Right ventricle myocardium superior (tissue), 1 donor: ENCODE measurements at regions of chr17 and their contacts with region 1.

Region 1: DNA sequence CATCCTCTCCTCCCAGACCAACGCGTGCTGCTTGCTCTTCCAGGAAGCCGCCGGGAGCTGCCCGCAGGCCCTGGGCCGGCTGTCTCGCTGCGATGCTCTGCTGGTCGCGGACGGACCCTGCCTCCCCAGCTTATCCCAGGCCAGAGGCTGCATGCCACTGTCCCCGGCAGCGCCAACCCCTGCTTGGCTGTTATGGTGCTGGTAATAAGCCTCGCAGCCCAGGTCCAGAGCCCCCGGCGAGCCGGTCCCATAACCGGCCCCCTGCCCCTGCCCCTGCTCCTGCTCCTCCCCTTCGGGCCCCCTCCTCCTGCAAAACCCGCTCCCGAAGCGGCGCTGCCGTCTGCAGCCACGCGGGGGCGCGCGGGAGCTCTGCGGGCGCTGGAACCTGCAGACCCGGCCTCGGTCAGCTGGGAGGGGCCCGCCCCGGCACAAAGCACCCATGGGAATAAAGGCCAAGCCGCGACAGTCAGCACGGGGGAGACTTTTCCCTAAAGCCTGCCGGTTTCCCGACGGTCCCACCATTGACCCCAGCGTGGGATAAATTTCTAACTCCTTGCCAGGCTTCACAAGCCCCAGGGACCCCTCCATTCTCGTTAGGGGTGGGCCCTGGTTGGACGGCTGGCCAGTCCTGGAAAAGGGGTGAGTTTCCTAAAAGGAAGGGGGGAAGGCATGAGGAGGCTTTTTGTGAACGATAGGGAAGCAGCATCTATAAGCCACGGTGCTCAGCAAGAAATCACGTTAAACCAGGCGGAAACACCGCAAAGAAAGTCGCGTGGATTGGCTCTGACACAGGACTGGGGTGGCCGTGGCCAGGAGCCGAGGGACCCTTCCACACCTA is 11.2 kb downstream of the ENPP7 start:
- DNase-seq: peak; percentile 84
- ATAC-seq: peak; percentile 81

Region 2: DNA sequence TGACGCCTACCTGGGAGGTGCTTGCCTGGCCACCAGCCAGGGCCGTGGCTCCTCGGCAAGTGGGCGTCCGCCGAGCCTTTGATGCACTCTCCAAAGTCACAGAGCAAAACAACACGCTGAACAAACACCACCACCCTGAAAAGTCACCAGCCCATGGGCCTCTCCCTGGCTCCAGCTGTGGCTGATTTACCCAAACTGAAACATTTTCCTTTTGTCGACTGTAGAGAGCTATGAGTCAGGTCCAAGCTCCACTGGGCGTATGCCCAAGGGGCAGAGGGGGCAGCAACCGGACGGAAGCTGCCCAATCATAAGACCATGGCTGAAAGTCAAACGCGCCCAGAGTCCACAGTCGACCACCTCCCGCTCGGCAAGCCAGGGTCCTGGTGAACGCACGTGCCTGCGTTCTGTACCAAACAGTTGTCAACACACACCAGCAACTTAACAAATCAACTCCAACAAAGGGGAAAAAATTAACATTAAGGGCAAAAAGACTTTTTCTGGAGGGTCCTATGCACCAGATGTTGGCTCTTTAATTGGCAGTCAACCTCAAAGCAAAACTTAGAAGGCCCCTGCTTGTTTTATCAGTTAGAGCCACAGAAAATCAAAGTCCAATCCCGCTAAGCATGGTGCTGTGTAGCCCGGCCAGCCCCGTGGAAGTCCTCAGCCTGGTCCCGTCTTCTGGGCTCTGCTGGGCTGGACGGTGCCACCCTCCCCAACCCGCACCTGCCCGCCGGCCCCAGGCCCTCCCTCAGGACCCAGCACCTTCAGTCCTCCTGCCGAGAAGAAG is 246.4 kb after region 1 on chr17:
- intact Hi-C with region 1: loop called (anchors 5 kb)
- DNase-seq: no peak
- ATAC-seq: no peak